MCF 10A (cell line): ENCODE measurements at regions of chr11 and their contacts with region 1.

Region 1: DNA sequence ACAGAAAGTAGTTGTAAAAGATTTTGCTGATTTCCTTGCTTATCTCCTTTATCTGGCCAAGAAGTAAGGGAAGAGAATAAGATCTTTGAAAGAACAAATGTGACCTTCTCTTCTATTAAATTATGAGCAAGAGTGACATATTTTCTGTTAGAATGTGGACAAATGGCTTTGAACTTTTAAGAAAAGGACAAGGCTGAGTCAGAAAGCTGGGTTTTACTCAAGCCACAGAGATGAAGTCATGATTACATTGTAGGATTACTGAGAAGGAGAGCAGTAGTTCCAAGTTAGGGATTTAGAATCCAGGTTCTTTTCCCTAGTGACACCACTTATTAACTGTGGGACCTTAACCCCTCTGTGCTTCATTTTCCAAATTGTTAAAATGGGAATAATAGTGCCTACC is 13.5 kb downstream of the CCDC90B start:
- DNase-seq: no peak
- H3K4me3 Mint-ChIP-seq: no peak overlapping the region
- H3K27ac Mint-ChIP-seq: no peak overlapping the region
- H3K4me1 Mint-ChIP-seq: peaks cover 5% of the 10 kb centered on the region
- H3K27me3 Mint-ChIP-seq: no peaks in the 10 kb centered on the region
- CTCF ChIP-seq: no peak

Region 2: GRCh38 chr11:83235825-83236224 is 36.8 kb before region 1 on chr11:
- CTCF ChIA-PET with region 1: no interaction called
- POLR2A ChIA-PET with region 1: no interaction called
- intact Hi-C with region 1: no loop called
- DNase-seq: no peak
- H3K4me3 Mint-ChIP-seq: no peak overlapping the region
- H3K27ac Mint-ChIP-seq: no peak overlapping the region
- H3K4me1 Mint-ChIP-seq: no peaks in the 10 kb centered on the region
- H3K27me3 Mint-ChIP-seq: no peaks in the 10 kb centered on the region
- CTCF ChIP-seq: no peak

Region 3: DNA sequence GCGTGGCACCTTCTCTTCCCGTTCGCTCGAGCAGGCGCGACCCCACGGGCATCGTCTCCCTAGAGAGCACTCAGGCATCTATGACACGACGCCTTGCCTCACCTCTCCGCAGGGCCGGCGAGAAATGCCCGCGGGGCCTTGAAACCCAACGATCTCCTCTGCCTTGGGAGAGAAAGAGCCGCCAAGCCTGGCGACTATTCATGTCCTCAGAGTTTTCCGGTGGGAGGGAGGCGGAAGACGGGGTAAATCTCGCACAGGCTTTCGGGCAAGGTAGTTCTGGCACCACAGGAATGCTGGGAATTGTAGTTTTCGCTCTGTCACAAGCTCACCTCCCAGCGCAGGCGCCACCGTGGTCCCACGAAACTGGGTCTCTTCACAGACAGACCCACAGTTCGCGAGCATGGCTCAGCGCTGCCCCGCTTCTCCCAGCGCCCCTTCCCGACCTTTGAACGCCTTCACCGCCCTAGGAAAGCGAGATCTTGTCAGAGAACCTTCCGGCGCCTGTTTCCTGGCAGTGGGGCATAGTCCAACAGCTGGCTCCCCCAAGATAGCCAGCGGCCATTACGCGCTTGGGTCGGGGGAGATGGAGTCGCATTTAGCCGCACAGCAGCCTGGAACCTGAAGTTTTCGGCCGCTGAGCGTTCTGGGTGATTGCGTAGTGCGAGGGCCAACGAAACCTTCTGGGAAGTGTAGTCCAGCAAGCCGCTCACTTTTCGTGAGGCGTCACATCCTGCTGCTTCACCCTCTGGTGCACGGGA is 13.3 kb after region 1 on chr11 and contains the start of gene CCDC90B:
- CTCF ChIA-PET with region 1: interaction called, 3 read pairs
- POLR2A ChIA-PET with region 1: interaction called, 13 read pairs
- intact Hi-C with region 1: no loop called
- DNase-seq: peak; percentile 97
- H3K4me3 Mint-ChIP-seq: peak within 1 kb of the TSS; percentile 90
- H3K27ac Mint-ChIP-seq: peak within 1 kb of the TSS; percentile 99
- H3K4me1 Mint-ChIP-seq: peaks cover 10% of the 10 kb centered on the region
- H3K27me3 Mint-ChIP-seq: no peaks in the 10 kb centered on the region
- CTCF ChIP-seq: peak; percentile 6
- total RNA-seq, gene CCDC90B: 69.1 and 72.9 TPM in 2 replicates

Region 4: GRCh38 chr11:83355391-83355790 is 82.8 kb after region 1 on chr11:
- CTCF ChIA-PET with region 1: no interaction called
- POLR2A ChIA-PET with region 1: no interaction called
- intact Hi-C with region 1: no loop called
- DNase-seq: no peak
- H3K4me3 Mint-ChIP-seq: no peak overlapping the region
- H3K27ac Mint-ChIP-seq: no peak overlapping the region
- H3K4me1 Mint-ChIP-seq: no peaks in the 10 kb centered on the region
- H3K27me3 Mint-ChIP-seq: no peaks in the 10 kb centered on the region
- CTCF ChIP-seq: no peak